ENCODE measurements at regions of chr3 and their contacts with region 1.

Region 1: GRCh38 chr3:184711493-184712247 is at the start of gene MAGEF1:
- DNase-seq: peak; percentile 77
- H3K4me3 Mint-ChIP-seq: peak within 1 kb of the TSS; percentile 84
- H3K27ac Mint-ChIP-seq: peak within 1 kb of the TSS; percentile 43
- H3K4me1 Mint-ChIP-seq: peaks cover 34% of the 10 kb centered on the region
- H3K27me3 Mint-ChIP-seq: no peaks in the 10 kb centered on the region
- CTCF ChIP-seq: no peak
- total RNA-seq, gene MAGEF1: 34.5 and 41.2 TPM in 2 replicates

Region 2: DNA sequence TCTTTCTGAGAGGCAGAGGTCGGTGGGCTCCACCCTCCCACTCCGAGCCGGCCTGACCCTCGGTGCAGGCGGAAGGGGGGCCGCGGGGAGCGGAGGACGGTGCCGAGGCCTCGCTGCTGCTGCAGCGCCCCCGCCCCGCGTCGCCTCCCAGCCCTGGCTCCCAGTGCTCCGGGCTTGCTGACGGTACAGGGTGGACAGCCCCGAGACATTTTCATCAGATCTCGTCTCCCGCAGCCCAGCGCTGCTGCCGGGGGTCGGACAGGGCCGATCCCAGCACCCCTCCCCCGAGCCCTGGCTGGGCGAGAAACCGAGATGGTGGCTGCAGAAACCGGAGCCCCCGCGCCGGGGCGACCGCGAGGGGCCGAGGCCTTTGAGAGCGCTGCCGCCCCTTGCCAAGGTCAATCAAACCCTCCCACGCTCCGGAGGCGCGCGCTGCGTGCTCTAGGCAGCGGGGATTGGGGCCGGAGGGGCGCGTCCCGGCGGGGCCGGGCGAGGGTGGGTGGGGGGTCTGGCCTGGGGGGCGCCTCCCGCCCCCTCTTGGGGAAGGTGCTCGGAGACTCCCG is 107.5 kb before region 1 on chr3:
- CTCF ChIA-PET with region 1: no interaction called
- POLR2A ChIA-PET with region 1: interaction called, 14 read pairs
- intact Hi-C with region 1: loop called (anchors 5 kb)
- DNase-seq: no peak
- H3K4me3 Mint-ChIP-seq: no peak overlapping the region
- H3K27ac Mint-ChIP-seq: no peak overlapping the region
- H3K4me1 Mint-ChIP-seq: peaks cover 29% of the 10 kb centered on the region
- H3K27me3 Mint-ChIP-seq: no peaks in the 10 kb centered on the region
- CTCF ChIP-seq: no peak

Region 3: GRCh38 chr3:184688251-184688881 is 23.3 kb before region 1 on chr3:
- CTCF ChIA-PET with region 1: no interaction called
- POLR2A ChIA-PET with region 1: interaction called, 10 read pairs
- intact Hi-C with region 1: no loop called
- DNase-seq: peak; percentile 56
- H3K4me3 Mint-ChIP-seq: no peak overlapping the region
- H3K27ac Mint-ChIP-seq: peak overlapping the region; percentile 12
- H3K4me1 Mint-ChIP-seq: peaks cover 15% of the 10 kb centered on the region
- H3K27me3 Mint-ChIP-seq: no peaks in the 10 kb centered on the region
- CTCF ChIP-seq: no peak

Region 4: GRCh38 chr3:184727357-184728009 is 15.8 kb after region 1 on chr3:
- CTCF ChIA-PET with region 1: interaction called, 17 read pairs
- POLR2A ChIA-PET with region 1: interaction called, 11 read pairs
- intact Hi-C with region 1: no loop called
- DNase-seq: peak; percentile 90
- H3K4me3 Mint-ChIP-seq: no peak overlapping the region
- H3K27ac Mint-ChIP-seq: no peak overlapping the region
- H3K4me1 Mint-ChIP-seq: peaks cover 6% of the 10 kb centered on the region
- H3K27me3 Mint-ChIP-seq: no peaks in the 10 kb centered on the region
- CTCF ChIP-seq: peak; percentile 50

Region 5: DNA sequence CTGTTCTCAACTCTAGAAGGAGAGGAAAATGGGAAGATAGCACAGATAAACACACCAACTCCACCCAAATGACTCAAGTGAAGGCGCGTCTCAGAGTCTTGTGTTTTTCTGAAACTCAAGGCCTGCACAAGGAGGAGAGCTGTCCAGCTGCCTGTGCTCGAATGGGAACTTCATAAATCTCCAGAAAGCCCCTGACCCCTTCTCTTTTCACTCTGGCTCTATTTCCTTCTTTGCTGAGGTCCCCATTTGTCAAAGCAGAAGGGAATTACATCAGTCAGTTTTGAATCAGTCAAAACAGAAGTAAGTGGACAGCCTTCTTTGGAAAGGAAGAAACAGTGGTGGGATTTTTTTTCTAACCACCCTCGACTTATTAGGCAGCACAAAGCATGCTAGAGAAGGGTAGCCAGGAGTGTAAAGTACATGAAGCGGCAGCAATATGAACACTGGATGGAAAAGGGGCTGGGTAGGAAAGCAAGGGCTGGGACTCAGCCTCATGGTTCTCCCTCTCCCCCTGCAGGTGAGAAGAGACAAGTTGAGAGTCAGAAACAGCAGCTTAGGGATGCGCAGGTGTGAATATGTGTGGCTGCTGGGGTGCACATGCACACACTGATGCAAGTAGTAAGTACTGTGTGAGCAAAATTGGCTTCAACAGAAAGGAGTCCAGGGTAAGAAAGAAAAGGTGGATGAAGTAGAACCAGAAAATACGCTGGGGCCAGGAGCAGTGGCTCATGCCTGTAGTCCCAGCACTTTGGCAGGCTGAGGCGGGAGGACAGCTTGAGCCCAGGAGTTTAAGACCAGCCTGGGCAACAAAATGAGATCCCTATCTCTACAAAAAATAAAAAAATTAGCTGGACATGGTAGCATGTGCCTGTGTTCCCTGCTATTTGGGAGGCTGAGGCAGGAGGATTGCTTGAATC is 36.8 kb after region 1 on chr3:
- CTCF ChIA-PET with region 1: interaction called, 6 read pairs
- POLR2A ChIA-PET with region 1: interaction called, 16 read pairs
- intact Hi-C with region 1: no loop called
- DNase-seq: peak; percentile 73
- H3K4me3 Mint-ChIP-seq: no peak overlapping the region
- H3K27ac Mint-ChIP-seq: no peak overlapping the region
- H3K4me1 Mint-ChIP-seq: peaks cover 18% of the 10 kb centered on the region
- H3K27me3 Mint-ChIP-seq: no peaks in the 10 kb centered on the region
- CTCF ChIP-seq: peak; percentile 60

Region 6: GRCh38 chr3:184952671-184953070 is 241.0 kb after region 1 on chr3:
- CTCF ChIA-PET with region 1: no interaction called
- POLR2A ChIA-PET with region 1: no interaction called
- intact Hi-C with region 1: no loop called
- DNase-seq: peak; percentile 20
- H3K4me3 Mint-ChIP-seq: no peak overlapping the region
- H3K27ac Mint-ChIP-seq: peak overlapping the region; percentile 50
- H3K4me1 Mint-ChIP-seq: no peaks in the 10 kb centered on the region
- H3K27me3 Mint-ChIP-seq: no peaks in the 10 kb centered on the region
- CTCF ChIP-seq: no peak